WTC11 (cell line): ENCODE measurements at regions of chr1 and their contacts with region 1.

Region 1: DNA sequence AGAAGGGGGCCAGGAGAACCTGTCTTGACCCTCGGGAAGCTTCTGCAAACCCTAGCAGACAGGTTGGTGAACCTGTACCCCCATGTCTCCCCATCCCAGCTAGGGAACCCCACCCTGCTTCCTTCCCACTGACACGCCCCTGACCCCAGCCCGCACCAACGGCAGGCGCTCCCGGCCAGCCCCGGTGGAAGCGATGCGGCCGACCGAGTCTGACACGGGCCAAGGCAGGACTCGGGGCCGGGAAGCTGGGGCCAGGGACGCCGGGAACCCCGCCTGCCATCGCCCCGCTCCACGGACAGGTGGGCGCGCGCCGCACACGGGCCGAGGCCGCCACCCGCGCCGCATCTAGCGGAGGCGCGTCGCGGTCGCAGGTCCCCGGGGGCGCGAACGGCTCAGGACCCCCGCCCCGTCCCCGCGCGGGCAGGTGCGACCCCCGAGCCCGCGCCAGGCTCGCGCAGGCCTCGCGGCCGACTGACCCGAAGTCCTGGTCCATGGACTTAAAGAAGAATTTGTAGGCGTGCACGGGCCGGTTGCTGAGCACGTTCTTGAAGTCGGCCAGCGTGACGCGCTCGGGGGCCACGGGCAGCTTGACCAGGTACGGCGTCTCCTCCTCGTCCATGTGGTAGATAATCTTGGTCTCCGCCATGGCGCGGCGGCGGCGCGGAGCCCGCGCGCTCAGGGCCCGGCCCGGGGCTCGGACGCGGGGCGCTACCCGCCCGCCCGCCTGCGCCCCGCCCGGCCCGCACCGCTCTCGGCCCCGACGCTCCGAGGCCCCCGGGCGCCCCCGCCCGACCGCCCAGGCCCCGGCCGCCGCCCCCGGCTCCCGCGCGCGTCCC is 580 bp downstream of the DVL1 start:
- DNase-seq: no peak
- ATAC-seq: no peak
- H3K4me3 Mint-ChIP-seq: peak overlapping the region; percentile 70
- H3K27ac Mint-ChIP-seq: no peak overlapping the region
- H3K4me1 Mint-ChIP-seq: peaks cover 25% of the 10 kb centered on the region
- H3K27me3 Mint-ChIP-seq: peaks cover 5% of the 10 kb centered on the region
- CTCF ChIP-seq: no peak

Region 2: DNA sequence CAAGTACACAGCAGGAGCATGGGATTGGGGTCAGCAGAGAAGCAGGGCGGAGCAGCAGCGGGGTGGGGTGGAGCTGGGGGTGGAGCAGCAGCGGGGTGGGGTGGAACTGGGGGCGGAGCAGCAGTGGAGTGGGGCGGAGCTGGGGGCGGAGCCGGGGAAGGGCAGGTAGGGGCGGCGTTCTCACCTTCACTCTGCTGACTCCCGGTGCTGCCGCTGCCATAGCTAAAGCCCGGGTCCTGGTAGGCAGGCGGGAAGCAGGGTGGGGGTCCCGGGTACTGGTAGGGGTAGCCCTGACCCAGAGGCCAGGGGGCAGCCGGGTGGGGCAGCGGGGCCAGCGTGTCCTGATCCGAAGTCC is 10.9 kb before region 1 on chr1:
- CTCF ChIA-PET with region 1: interaction called, 18 read pairs
- POLR2A ChIA-PET with region 1: interaction called, 5 read pairs
- DNase-seq: peak; percentile 80
- ATAC-seq: peak; percentile 85
- H3K4me3 Mint-ChIP-seq: no peak overlapping the region
- H3K27ac Mint-ChIP-seq: no peak overlapping the region
- H3K4me1 Mint-ChIP-seq: no peaks in the 10 kb centered on the region
- H3K27me3 Mint-ChIP-seq: no peaks in the 10 kb centered on the region
- CTCF ChIP-seq: no peak

Region 3: DNA sequence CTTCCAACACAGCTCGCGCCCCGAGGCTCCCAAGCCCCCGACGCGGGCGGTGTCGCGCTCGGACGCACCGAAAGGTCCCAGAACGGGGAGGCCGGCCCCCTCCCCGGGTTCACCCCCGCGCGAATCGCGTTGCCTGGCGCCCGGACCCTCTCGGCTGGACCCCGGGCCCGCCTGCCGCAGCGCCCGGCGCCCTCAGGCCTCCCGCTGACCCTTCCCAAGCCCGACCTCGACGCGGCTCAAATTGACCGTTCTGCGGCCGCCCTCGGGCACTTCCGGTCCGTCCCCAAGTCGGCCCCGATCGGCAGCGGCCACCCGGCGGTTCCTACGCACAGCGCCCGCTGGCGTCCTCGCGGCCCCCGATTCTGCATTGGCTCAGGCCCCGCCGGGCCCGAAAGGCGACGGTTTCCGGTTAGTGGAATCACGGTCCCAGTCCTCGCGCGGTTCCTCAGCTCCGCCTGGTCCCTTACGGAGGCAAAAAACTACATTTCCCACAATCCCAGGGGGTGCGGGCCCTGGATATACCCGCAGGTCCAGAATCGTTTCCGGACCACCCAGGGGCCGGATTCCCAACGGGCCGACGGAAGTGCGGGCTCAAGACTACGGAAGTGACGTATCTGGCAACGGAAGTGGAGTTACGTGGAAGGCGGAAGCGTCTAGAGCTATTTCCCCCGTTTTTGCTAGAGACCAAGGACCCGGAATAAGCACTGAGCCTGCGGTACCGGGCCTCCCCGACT is 26.5 kb after region 1 on chr1 and contains the start of gene AURKAIP1:
- CTCF ChIA-PET with region 1: interaction called, 12 read pairs
- POLR2A ChIA-PET with region 1: interaction called, 4 read pairs
- DNase-seq: peak; percentile 98
- ATAC-seq: peak; percentile 91
- H3K4me3 Mint-ChIP-seq: peak within 1 kb of the TSS; percentile 82
- H3K27ac Mint-ChIP-seq: peak within 1 kb of the TSS; percentile 87
- H3K4me1 Mint-ChIP-seq: peaks cover 3% of the 10 kb centered on the region; the same call in 1 of the 2 replicates
- H3K27me3 Mint-ChIP-seq: no peaks in the 10 kb centered on the region
- CTCF ChIP-seq: no peak
- total RNA-seq, gene AURKAIP1: 238 to 268 TPM (median 250 TPM) in 3 replicates

Region 4: GRCh38 chr1:1471389-1472052 is 122.9 kb after region 1 on chr1 and contains the start of gene ATAD3B:
- CTCF ChIA-PET with region 1: no interaction called
- POLR2A ChIA-PET with region 1: no interaction called
- DNase-seq: peak; percentile 96
- ATAC-seq: peak; percentile 84
- H3K4me3 Mint-ChIP-seq: peak within 1 kb of the TSS; percentile 95
- H3K27ac Mint-ChIP-seq: peak within 1 kb of the TSS; percentile 99
- H3K4me1 Mint-ChIP-seq: peaks cover 9% of the 10 kb centered on the region; the same call in 1 of the 2 replicates
- H3K27me3 Mint-ChIP-seq: no peaks in the 10 kb centered on the region
- CTCF ChIP-seq: no peak
- total RNA-seq, gene ATAD3B: 47.9 to 63.6 TPM (median 48.5 TPM) in 3 replicates